ENCODE measurements at regions of chr9 and their contacts with region 1.

Region 1: GRCh38 chr9:111483862-111484571 is at the start of gene ECPAS:
- DNase-seq: no peak
- H3K4me3 ChIP-seq: peak within 1 kb of the TSS; percentile 86 to 99 (median 93)
- H3K27ac ChIP-seq: peak within 1 kb of the TSS; percentile 97 to 99 (median 99)
- H3K4me1 ChIP-seq: peaks cover 9 to 42% (median 37%) of the 10 kb centered on the region in 4 donors
- H3K27me3 ChIP-seq: no peaks in the 10 kb centered on the region
- CTCF ChIP-seq: no peak
- EP300 ChIP-seq: no peak
- POLR2A ChIP-seq: no peak
- total RNA-seq, gene ECPAS: 72.9 to 89.3 (median 80.6) TPM

Region 2: DNA sequence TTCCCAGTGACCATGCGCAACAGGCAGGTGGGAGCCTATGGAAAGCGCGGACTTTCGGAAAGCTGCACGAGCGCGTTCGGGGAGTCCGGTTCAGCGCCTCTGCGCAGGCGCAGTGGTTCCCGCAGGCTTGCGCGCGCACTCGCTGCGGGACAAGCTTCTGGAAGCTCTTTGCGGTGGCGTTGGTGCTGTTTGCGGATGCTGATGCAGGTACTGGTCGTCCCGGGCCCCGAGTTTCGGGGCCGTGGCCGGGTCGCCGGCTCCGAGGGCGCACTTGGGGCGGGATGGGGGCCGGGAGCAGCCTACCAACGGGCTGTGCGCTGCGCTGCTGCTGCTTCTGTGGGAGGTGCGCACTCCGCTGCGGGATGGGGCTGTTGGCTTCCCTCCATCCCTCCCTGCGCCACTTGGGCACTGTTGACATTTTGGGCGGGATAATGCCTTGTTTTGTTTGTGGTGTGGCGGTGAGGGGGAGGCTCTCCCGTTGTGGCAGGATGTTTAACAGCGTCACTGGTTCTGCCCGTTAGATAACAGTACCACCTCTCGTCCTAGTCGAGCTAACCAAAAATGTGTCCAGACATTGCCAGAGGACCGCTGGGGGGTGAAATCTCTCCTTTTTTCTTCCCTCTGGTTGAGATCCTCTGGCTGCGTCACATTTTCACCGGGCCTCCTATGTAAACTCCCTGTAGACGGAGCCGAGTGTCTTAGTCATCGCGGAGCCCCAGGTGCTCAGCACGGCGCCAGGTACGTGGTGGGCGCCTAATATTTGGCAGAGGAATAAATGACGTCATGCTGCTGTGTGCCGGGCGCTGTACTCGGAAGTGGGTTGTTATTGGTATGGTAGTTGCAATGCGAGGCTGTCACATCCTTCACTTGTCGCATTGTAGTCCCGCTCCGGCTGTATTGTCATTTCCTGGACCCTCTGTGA is 41.3 kb after region 1 on chr9 and contains the start of gene ZNF483:
- intact Hi-C with region 1: loop called (anchors 5 kb)
- DNase-seq: no peak
- H3K4me3 ChIP-seq: peak within 1 kb of the TSS; percentile 81 to 90 (median 89)
- H3K27ac ChIP-seq: peak within 1 kb of the TSS; percentile 73 to 81 (median 78)
- H3K4me1 ChIP-seq: peaks cover 10 to 21% (median 16%) of the 10 kb centered on the region in 4 donors
- H3K27me3 ChIP-seq: no peaks in the 10 kb centered on the region
- CTCF ChIP-seq: no peak
- EP300 ChIP-seq: no peak
- POLR2A ChIP-seq: no peak
- total RNA-seq, gene ZNF483: 11.0 to 15.0 (median 14.5) TPM